Activated CD4-positive, alpha-beta T cell treated with anti-CD3 and anti-CD28 coated beads, Interleukin-2, amount 10 ng/mL, durations not matched to agents 7 days and 5 days (primary cell): ENCODE measurements at regions of chr16 and their contacts with region 1.

Region 1: DNA sequence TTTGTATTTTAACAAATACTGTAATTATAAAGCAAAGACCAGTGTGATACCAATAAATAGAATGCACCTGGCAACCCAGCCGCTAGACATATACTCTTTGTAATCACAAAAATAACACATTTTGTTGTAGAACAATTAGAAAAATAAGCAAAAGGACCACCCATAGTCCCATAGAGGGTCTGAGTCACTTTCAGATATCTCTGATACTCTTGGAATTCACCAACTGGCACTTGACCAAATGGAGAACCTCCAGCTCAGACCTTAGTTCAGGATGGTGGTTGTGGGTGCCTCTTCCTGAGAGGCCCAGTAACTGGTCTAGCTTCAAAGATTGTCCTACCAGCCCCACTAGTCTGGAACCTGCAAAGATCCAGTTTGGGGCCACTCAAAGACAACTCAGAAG is 789 bp upstream of the TERF2 start:
- DNase-seq: no peak
- H3K4me3 Mint-ChIP-seq: peak overlapping the region; percentile 82
- H3K27ac Mint-ChIP-seq: peak overlapping the region; percentile 93
- H3K4me1 Mint-ChIP-seq: peaks cover 33% of the 10 kb centered on the region
- H3K27me3 Mint-ChIP-seq: no peaks in the 10 kb centered on the region

Region 2: DNA sequence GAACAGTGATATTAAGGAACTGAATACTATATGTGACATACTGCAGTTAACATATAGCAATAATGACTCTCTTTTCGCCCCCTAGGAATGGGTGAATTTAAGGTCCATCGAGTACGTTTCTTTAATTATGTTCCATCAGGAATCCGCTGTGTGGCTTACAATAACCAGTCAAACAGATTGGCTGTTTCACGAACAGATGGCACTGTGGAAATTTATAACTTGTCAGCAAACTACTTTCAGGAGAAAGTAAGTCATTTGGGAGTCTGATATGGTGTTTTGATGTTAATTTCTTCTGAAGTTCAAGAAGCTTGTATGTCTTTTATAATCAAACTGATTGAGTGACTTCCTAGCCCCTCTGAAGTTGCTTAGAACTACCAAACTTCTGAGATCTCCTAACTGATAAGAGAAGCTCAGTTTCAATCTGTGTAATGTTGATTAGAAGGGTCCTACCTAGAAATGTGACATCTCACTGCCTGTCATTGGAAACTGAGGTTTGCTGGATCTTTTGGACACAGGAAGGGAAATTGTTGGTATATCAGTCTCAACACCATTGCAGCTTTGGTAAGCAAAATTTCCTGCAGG is 253.1 kb before region 1 on chr16:
- CTCF ChIA-PET with region 1: no interaction called
- POLR2A ChIA-PET with region 1: no interaction called
- DNase-seq: no peak
- H3K4me3 Mint-ChIP-seq: peak overlapping the region; percentile 96
- H3K27ac Mint-ChIP-seq: peak overlapping the region; percentile 93
- H3K4me1 Mint-ChIP-seq: peaks cover 58% of the 10 kb centered on the region
- H3K27me3 Mint-ChIP-seq: no peaks in the 10 kb centered on the region

Region 3: GRCh38 chr16:69349508-69349907 is 37.1 kb before region 1 on chr16:
- CTCF ChIA-PET with region 1: interaction called, 4 read pairs
- POLR2A ChIA-PET with region 1: interaction called, 12 read pairs
- DNase-seq: no peak
- H3K4me3 Mint-ChIP-seq: no peak overlapping the region
- H3K27ac Mint-ChIP-seq: no peak overlapping the region
- H3K4me1 Mint-ChIP-seq: no peaks in the 10 kb centered on the region
- H3K27me3 Mint-ChIP-seq: no peaks in the 10 kb centered on the region

Region 4: GRCh38 chr16:69482410-69482991 is 95.9 kb after region 1 on chr16:
- CTCF ChIA-PET with region 1: no interaction called
- POLR2A ChIA-PET with region 1: no interaction called
- DNase-seq: no peak
- H3K4me3 Mint-ChIP-seq: no peak overlapping the region
- H3K27ac Mint-ChIP-seq: no peak overlapping the region
- H3K4me1 Mint-ChIP-seq: no peaks in the 10 kb centered on the region
- H3K27me3 Mint-ChIP-seq: no peaks in the 10 kb centered on the region